T-cell (primary cell): ENCODE measurements at regions of chr17 and their contacts with region 1.

Region 1: GRCh38 chr17:64582879-64583632 is 76.3 kb downstream of the CEP95 start:
- DNase-seq: no peak
- ATAC-seq: no peak
- H3K4me3 ChIP-seq: no peak overlapping the region
- H3K4me3 Mint-ChIP-seq: no peak overlapping the region
- H3K27ac ChIP-seq: no peak overlapping the region
- H3K27ac Mint-ChIP-seq: no peak overlapping the region
- H3K4me1 ChIP-seq: no peaks in the 10 kb centered on the region
- H3K4me1 Mint-ChIP-seq: peaks cover 0 to 13% (median 10%) of the 10 kb centered on the region in 3 donors
- H3K27me3 ChIP-seq: no peaks in the 10 kb centered on the region
- H3K27me3 Mint-ChIP-seq: no peaks in the 10 kb centered on the region

Region 2: GRCh38 chr17:64455993-64456885 is 126.8 kb before region 1 on chr17:
- CTCF ChIA-PET with region 1: interaction called in 1 of 2 experiments, 10 read pairs
- POLR2A ChIA-PET with region 1: no interaction called
- DNase-seq: peak in 3 of 35 experiments; percentile 2 to 29 (median 11)
- ATAC-seq: peak; percentile 69 to 90 (median 80)
- H3K4me3 ChIP-seq: peak overlapping the region in 1 of 2 donors; percentile 32
- H3K4me3 Mint-ChIP-seq: peak overlapping the region in 1 of 3 donors; percentile 56
- H3K27ac ChIP-seq: peak overlapping the region; percentile 70
- H3K27ac Mint-ChIP-seq: peak overlapping the region; percentile 88 to 92
- H3K4me1 ChIP-seq: peaks cover 8 to 18% of the 10 kb centered on the region in 2 experiments
- H3K4me1 Mint-ChIP-seq: peaks cover 13 to 31% (median 22%) of the 10 kb centered on the region in 3 donors
- H3K27me3 ChIP-seq: no peaks in the 10 kb centered on the region
- H3K27me3 Mint-ChIP-seq: peaks cover 0 to 3% of the 10 kb centered on the region in 2 donors

Region 3: DNA sequence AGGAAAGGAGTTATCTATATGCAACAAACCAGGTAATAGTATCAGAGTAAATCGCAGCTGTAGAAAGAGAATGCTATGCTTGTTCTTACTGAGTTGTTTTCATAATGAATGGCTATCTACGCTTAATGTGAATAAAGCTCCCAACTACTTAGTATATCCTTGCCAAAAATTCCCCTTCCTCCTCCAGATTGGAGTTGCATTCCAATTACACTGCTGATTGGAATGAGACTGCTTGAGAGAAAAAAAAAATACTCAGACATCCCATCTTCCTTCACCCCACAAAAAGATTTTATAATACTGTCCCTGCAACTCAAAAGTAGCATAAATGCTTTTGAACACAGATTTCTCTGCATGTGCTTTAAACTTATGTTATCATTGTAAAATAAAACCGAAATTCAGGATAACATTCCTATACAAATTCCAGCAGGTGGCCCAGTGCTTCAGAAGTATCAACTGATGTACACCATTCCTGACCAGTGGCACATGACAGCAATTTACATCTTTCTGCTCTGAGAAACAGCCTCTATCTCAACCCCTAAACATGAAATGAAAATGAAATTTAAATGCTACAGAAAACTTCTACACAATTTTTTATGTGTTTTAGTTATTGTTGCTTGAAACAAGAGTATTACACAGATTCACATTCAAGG is 32.1 kb after region 1 on chr17:
- CTCF ChIA-PET with region 1: no interaction called
- POLR2A ChIA-PET with region 1: no interaction called
- DNase-seq: no peak
- ATAC-seq: no peak
- H3K4me3 ChIP-seq: no peak overlapping the region
- H3K4me3 Mint-ChIP-seq: no peak overlapping the region
- H3K27ac ChIP-seq: no peak overlapping the region
- H3K27ac Mint-ChIP-seq: no peak overlapping the region
- H3K4me1 ChIP-seq: peaks cover under 1 to 7% of the 10 kb centered on the region in 2 experiments
- H3K4me1 Mint-ChIP-seq: peaks cover 34 to 47% (median 44%) of the 10 kb centered on the region in 3 donors
- H3K27me3 ChIP-seq: no peaks in the 10 kb centered on the region
- H3K27me3 Mint-ChIP-seq: no peaks in the 10 kb centered on the region